Activated T-helper 1 cell treated with anti-CD3 and anti-CD28 coated beads, Interleukin-12 subunit alpha, Interleukin-12 subunit beta, Interleukin-2, Interleukin-4 antibody, amounts not matched to agents 30 ng/mL and 10 ng/mL and 1 ng/mL, durations not matched to agents 14 hours and 24 hours and 36 hours (primary cell): ENCODE measurements at regions of chr21 and their contacts with region 1.

Region 1: GRCh38 chr21:15483138-15483780 is 246.5 kb upstream of the USP25 start:
- DNase-seq: peak; percentile 57
- H3K4me3 Mint-ChIP-seq: no peak overlapping the region
- H3K27ac Mint-ChIP-seq: no peak overlapping the region
- H3K4me1 Mint-ChIP-seq: peaks cover 19% of the 10 kb centered on the region
- H3K27me3 Mint-ChIP-seq: peaks cover 4% of the 10 kb centered on the region

Region 2: DNA sequence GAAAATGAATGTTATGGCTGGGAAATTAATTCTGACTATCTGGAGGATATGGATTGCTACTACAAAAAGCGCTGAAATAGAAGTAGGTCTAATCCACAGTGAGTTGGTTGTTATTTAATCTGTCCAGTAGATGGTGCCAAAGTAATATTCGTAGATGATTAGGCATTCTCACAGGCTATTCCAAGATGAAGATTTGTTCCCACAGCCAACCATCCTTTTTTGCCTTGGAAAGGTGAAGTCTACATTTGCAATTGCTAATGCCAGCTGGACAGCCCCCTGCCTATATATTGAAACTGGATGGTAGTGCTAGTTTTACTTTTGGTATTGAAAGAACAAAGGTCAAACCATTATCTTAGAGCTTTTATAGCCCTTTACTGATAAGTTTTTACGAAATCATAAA is 1223.5 kb before region 1 on chr21:
- intact Hi-C with region 1: loop called (anchors 2 kb)
- DNase-seq: no peak
- H3K4me3 Mint-ChIP-seq: no peak overlapping the region
- H3K27ac Mint-ChIP-seq: no peak overlapping the region
- H3K4me1 Mint-ChIP-seq: no peaks in the 10 kb centered on the region
- H3K27me3 Mint-ChIP-seq: peaks cover 10% of the 10 kb centered on the region

Region 3: DNA sequence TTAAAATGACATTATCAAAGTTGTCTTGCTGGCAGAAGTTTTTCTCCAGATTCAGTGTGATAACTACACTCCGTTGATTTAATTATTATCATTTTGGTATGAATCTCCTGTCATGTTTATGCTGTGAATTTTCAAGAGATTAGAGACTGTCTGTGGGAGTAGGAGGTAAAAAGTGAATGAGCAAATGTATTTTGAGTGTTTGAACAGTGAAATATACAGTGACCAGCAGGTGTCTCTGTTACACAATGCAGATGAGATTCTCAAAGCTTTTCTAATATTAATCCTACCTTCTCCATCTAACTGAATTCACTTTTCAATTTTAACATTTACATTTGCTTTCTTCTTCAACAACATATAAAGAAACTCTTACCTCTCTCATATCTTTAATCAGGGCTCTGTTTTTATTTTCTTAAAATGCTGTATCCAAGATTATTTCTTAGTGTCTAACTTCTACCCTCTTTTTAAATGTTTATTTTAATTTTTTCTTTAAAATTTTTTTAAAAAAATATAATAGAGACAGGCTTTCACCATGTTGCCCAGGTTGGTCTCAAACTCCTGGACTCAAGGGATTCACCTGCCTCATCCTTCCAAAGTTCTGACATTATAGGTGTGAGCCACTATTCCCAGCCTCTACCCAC is 1079.5 kb before region 1 on chr21:
- intact Hi-C with region 1: loop called (anchors 1 kb)
- DNase-seq: no peak
- H3K4me3 Mint-ChIP-seq: no peak overlapping the region
- H3K27ac Mint-ChIP-seq: no peak overlapping the region
- H3K4me1 Mint-ChIP-seq: peaks cover 5% of the 10 kb centered on the region
- H3K27me3 Mint-ChIP-seq: no peaks in the 10 kb centered on the region

Region 4: DNA sequence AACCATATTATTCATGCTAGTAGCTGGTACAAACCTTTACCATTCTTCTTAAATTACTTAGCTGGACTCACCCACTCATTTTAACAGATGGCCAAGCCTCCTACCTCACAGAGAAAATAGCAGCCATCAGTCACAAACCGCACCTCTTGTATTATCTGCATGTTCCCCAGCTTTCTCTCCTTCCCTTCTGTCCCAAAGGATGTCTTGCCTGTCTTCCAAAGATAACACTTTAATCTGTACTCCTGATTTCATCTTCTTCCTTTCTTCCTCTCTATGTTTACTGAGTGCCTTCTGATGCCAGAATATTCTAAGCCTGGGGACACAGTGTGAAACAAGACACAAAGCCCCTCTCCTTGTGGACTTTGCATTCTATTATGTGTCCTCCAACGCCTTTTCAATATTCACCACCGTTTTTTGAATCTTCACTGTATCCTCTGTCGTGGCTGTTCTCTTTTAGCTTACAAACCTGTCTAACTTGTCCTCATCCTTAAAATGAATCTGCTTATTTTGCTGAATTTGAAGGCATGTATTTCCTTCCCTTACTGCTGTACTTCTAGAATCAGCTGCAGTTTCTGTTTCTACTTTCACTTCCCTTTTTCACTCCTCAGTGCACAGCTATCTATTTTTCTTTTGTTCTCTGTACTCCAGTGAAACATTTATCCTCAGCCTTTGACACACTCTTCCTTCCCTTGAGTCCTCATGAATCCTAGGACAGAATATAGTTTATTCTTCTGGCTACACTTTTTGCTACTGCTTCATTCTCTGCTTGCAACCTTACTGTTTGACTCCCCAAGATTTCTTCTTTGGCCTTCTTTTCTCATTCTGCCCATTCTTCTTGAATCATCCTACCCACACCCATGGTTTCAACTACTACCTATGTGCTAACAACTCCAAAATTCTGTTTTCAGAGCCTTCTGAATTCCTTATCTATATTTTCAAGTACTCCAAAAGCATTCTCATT is 720.2 kb before region 1 on chr21:
- intact Hi-C with region 1: loop called (anchors 10 kb)
- DNase-seq: no peak
- H3K4me3 Mint-ChIP-seq: no peak overlapping the region
- H3K27ac Mint-ChIP-seq: no peak overlapping the region
- H3K4me1 Mint-ChIP-seq: no peaks in the 10 kb centered on the region
- H3K27me3 Mint-ChIP-seq: peaks cover 2% of the 10 kb centered on the region

Region 5: GRCh38 chr21:14864211-14865021 is 618.8 kb before region 1 on chr21:
- intact Hi-C with region 1: loop called (anchors 1 kb)
- DNase-seq: peak; percentile 16
- H3K4me3 Mint-ChIP-seq: no peak overlapping the region
- H3K27ac Mint-ChIP-seq: no peak overlapping the region
- H3K4me1 Mint-ChIP-seq: peaks cover 5% of the 10 kb centered on the region
- H3K27me3 Mint-ChIP-seq: no peaks in the 10 kb centered on the region

Region 6: GRCh38 chr21:15034126-15034853 is 449.0 kb before region 1 on chr21:
- intact Hi-C with region 1: no loop called
- DNase-seq: no peak
- H3K4me3 Mint-ChIP-seq: no peak overlapping the region
- H3K27ac Mint-ChIP-seq: peak overlapping the region; percentile 63
- H3K4me1 Mint-ChIP-seq: peaks cover 20% of the 10 kb centered on the region
- H3K27me3 Mint-ChIP-seq: no peaks in the 10 kb centered on the region

Region 7: GRCh38 chr21:15400905-15401304 is 82.4 kb before region 1 on chr21:
- intact Hi-C with region 1: no loop called
- DNase-seq: no peak
- H3K4me3 Mint-ChIP-seq: no peak overlapping the region
- H3K27ac Mint-ChIP-seq: no peak overlapping the region
- H3K4me1 Mint-ChIP-seq: no peaks in the 10 kb centered on the region
- H3K27me3 Mint-ChIP-seq: no peaks in the 10 kb centered on the region

Region 8: DNA sequence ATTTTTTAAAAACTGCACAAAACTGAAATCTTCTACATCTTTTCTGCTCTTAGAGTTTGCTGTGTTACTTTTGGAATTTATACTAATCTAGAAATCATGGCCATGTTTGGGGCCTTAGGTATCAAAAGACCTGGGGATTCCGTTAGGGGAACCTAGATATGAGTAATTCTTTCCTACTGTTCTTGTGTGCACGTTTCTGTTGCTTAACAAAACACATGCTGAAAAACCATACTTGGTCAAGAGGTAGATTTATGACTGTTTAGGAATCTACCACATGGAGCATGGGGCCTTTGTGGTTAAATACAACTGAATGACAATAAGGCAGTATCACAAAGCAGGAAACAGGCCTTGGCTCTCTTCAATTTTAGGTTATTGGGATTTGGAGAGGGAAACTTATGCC is 45.4 kb before region 1 on chr21:
- intact Hi-C with region 1: loop called (anchors 1 kb)
- DNase-seq: no peak
- H3K4me3 Mint-ChIP-seq: no peak overlapping the region
- H3K27ac Mint-ChIP-seq: peak overlapping the region; percentile 34
- H3K4me1 Mint-ChIP-seq: peaks cover 12% of the 10 kb centered on the region
- H3K27me3 Mint-ChIP-seq: no peaks in the 10 kb centered on the region

Region 9: GRCh38 chr21:15592271-15592860 is 109.1 kb after region 1 on chr21:
- intact Hi-C with region 1: loop called (anchors 1 kb)
- DNase-seq: no peak
- H3K4me3 Mint-ChIP-seq: no peak overlapping the region
- H3K27ac Mint-ChIP-seq: no peak overlapping the region
- H3K4me1 Mint-ChIP-seq: no peaks in the 10 kb centered on the region
- H3K27me3 Mint-ChIP-seq: peaks cover 13% of the 10 kb centered on the region

Region 10: GRCh38 chr21:15659753-15660422 is 176.6 kb after region 1 on chr21:
- intact Hi-C with region 1: no loop called
- DNase-seq: no peak
- H3K4me3 Mint-ChIP-seq: no peak overlapping the region
- H3K27ac Mint-ChIP-seq: no peak overlapping the region
- H3K4me1 Mint-ChIP-seq: no peaks in the 10 kb centered on the region
- H3K27me3 Mint-ChIP-seq: peaks cover 6% of the 10 kb centered on the region